CD8-positive, alpha-beta T cell (primary cell): ENCODE measurements at regions of chr19 and their contacts with region 1.

Region 1: DNA sequence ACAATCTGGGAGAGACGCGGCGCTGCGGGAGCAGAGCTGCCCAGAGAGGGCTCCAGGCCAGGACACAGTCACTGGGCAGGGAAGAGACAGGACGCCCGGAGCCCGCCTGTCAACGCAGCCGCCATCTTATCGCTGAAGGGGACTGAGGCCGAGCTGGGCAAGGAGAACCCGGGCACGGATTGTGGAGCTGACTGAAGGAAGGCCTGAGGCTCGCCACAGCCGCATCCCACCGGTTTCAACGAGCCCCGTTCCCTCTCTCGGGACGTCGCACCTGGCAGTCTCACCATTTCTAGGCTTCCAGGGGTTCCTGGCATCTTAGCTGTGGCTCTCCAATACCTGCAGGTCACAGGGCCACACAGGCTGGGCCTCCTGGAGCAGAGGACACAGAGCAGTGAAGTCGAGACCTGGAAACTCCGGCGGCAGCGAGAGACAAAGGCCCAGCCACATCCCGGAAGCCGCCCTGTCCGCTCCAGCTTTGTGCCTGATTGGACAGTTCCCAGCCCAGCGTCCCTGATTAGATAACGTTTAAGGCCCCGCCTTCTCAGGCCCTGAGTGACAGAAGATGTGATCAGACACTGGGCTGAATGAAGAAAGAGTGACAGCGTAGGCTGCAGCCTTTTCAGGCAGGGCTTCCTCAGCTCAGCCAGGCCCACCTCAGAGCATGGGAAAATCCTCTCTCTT is at the start of gene ZNF91:
- DNase-seq: peak; percentile 76 to 97 (median 90)
- ATAC-seq: peak; percentile 94
- H3K4me3 ChIP-seq: peak within 1 kb of the TSS; percentile 81 to 85
- H3K4me3 Mint-ChIP-seq: peak within 1 kb of the TSS; percentile 98
- H3K27ac ChIP-seq: peak within 1 kb of the TSS; percentile 95 to 96
- H3K27ac Mint-ChIP-seq: peak within 1 kb of the TSS; percentile 99
- H3K4me1 ChIP-seq: peaks cover 30% of the 10 kb centered on the region
- H3K4me1 Mint-ChIP-seq: peaks cover 41% of the 10 kb centered on the region
- H3K27me3 ChIP-seq: no peaks in the 10 kb centered on the region
- H3K27me3 Mint-ChIP-seq: no peaks in the 10 kb centered on the region
- CTCF ChIP-seq: no peak
- total RNA-seq, gene ZNF91: 90.1 to 90.4 TPM

Region 2: DNA sequence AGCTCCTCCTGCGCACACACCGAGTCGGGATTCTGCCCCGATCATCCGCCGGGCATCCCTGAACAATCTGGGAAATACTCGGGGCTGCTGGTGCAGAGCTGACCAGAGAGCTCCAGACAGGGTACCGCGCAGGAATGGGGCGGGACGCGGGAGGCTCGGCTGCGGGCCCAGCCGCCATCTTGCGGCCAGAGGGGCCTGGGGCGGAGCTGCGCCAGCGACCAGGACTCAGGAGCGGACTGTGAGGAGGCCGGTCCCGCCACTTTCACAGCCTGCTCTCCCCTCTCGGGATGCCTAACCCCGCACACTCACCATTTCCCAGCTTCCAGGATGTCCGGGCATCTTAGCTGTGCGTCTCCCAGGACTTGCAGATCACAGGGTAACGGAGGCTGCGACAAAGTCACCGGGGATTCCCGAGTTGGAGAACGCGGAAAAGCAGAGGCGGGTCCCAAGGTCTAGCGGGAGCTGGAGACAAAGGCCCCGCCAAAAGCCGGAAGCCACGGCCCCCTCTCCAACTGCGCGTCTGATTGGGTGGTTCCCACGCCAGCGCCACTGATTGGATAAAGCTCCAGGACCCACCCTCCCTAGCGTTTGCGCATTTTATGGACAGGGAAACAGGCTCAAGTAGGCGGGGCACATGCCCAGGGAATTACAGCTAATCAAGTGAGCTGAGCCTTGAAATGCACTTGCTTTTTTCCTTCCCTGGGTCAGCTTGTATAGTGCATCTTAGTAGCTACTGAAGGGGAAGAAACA is 1543.4 kb before region 1 on chr19:
- CTCF ChIA-PET with region 1: no interaction called
- POLR2A ChIA-PET with region 1: no interaction called
- intact Hi-C with region 1: loop called in 1 of 2 experiments (anchors 5 kb)
- DNase-seq: peak; percentile 72 to 94 (median 90)
- ATAC-seq: peak; percentile 99
- H3K4me3 ChIP-seq: peak overlapping the region; percentile 95
- H3K4me3 Mint-ChIP-seq: peak overlapping the region; percentile 93
- H3K27ac ChIP-seq: peak overlapping the region; percentile 68 to 80
- H3K27ac Mint-ChIP-seq: peak overlapping the region; percentile 91
- H3K4me1 ChIP-seq: peaks cover 11% of the 10 kb centered on the region
- H3K4me1 Mint-ChIP-seq: peaks cover 26% of the 10 kb centered on the region
- H3K27me3 ChIP-seq: no peaks in the 10 kb centered on the region
- H3K27me3 Mint-ChIP-seq: peaks cover 2% of the 10 kb centered on the region
- CTCF ChIP-seq: no peak

Region 3: DNA sequence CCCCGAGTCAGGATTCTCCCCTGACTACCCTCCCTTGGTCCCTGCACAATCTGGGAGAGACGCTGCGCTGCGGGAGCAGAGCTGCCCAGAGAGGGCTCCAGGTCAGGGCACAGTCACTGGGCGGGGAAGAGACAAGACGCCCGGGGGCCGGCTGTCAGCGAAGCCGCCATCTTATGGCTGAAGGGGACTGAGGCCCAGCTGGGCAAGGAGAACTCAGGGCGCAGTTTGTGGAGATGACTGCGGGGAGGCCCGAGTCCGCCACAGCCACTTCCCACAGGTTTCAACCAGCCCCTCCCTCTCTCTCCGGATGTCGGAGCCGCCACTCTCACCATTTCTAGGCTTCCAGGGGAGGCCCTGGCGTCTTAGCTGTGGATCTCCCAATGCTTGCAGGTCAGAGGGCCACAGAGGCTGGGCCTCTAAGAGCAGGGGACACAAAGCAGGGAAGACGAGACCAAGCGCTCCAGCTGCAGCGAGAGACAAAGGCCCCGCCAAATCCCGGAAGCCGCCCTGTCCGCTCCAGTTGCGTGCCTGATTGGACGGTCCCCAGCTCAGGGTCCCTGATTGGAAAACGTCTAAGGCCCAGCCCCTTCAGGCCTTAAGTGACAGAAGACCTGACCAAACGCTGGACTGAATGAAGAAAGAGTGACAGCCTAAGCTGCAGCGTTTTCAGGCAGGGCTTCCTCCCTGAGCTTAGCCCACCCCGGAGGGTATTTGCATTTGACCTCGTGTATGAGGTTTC is 145.1 kb before region 1 on chr19 and contains the start of gene ZNF724:
- CTCF ChIA-PET with region 1: no interaction called
- POLR2A ChIA-PET with region 1: interaction called, 13 read pairs
- intact Hi-C with region 1: loop called in 1 of 2 experiments (anchors 1 kb)
- DNase-seq: peak; percentile 78 to 94 (median 88)
- ATAC-seq: peak; percentile 99
- H3K4me3 ChIP-seq: peak within 1 kb of the TSS; percentile 77 to 99
- H3K4me3 Mint-ChIP-seq: peak within 1 kb of the TSS; percentile 96
- H3K27ac ChIP-seq: peak within 1 kb of the TSS; percentile 54 to 62
- H3K27ac Mint-ChIP-seq: peak within 1 kb of the TSS; percentile 81
- H3K4me1 ChIP-seq: no peaks in the 10 kb centered on the region
- H3K4me1 Mint-ChIP-seq: peaks cover 12% of the 10 kb centered on the region
- H3K27me3 ChIP-seq: no peaks in the 10 kb centered on the region
- H3K27me3 Mint-ChIP-seq: no peaks in the 10 kb centered on the region
- CTCF ChIP-seq: no peak
- total RNA-seq, gene ZNF724: 3.6 to 4.2 TPM

Region 4: GRCh38 chr19:23263870-23264590 is 131.2 kb before region 1 on chr19:
- CTCF ChIA-PET with region 1: no interaction called
- POLR2A ChIA-PET with region 1: no interaction called
- intact Hi-C with region 1: no loop called
- DNase-seq: no peak
- ATAC-seq: no peak
- H3K4me3 ChIP-seq: no peak overlapping the region
- H3K4me3 Mint-ChIP-seq: no peak overlapping the region
- H3K27ac ChIP-seq: no peak overlapping the region
- H3K27ac Mint-ChIP-seq: no peak overlapping the region
- H3K4me1 ChIP-seq: no peaks in the 10 kb centered on the region
- H3K4me1 Mint-ChIP-seq: peaks cover 4% of the 10 kb centered on the region
- H3K27me3 ChIP-seq: no peaks in the 10 kb centered on the region
- H3K27me3 Mint-ChIP-seq: no peaks in the 10 kb centered on the region
- CTCF ChIP-seq: no peak

Region 5: GRCh38 chr19:23384858-23385257 is 10.3 kb before region 1 on chr19:
- CTCF ChIA-PET with region 1: interaction called, 12 read pairs
- POLR2A ChIA-PET with region 1: interaction called, 14 read pairs
- intact Hi-C with region 1: no loop called
- DNase-seq: no peak
- ATAC-seq: no peak
- H3K4me3 ChIP-seq: no peak overlapping the region
- H3K4me3 Mint-ChIP-seq: no peak overlapping the region
- H3K27ac ChIP-seq: no peak overlapping the region
- H3K27ac Mint-ChIP-seq: no peak overlapping the region
- H3K4me1 ChIP-seq: no peaks in the 10 kb centered on the region
- H3K4me1 Mint-ChIP-seq: peaks cover 37% of the 10 kb centered on the region
- H3K27me3 ChIP-seq: no peaks in the 10 kb centered on the region
- H3K27me3 Mint-ChIP-seq: no peaks in the 10 kb centered on the region
- CTCF ChIP-seq: no peak

Region 6: DNA sequence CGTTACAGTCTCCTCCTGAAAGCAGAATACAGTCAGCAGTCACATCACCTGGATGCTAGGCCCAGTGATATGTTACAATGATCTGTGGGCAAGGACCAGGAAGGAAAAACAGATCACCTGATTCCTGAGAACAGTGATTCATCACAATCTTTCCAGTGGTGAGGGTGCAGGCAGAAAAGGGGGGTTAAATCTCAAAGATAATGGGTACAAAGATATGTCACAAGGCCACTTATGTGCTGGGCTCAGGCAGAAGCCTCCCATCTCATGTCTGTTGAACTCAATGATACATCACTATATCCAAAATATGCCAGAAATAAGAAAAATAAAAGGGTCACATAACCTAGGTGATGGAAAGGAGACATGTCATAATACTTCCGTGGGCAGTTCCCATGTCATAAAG is 10.9 kb after region 1 on chr19:
- CTCF ChIA-PET with region 1: no interaction called
- POLR2A ChIA-PET with region 1: no interaction called
- intact Hi-C with region 1: no loop called
- DNase-seq: no peak
- ATAC-seq: no peak
- H3K4me3 ChIP-seq: no peak overlapping the region
- H3K4me3 Mint-ChIP-seq: no peak overlapping the region
- H3K27ac ChIP-seq: no peak overlapping the region
- H3K27ac Mint-ChIP-seq: no peak overlapping the region
- H3K4me1 ChIP-seq: no peaks in the 10 kb centered on the region
- H3K4me1 Mint-ChIP-seq: no peaks in the 10 kb centered on the region
- H3K27me3 ChIP-seq: no peaks in the 10 kb centered on the region
- H3K27me3 Mint-ChIP-seq: no peaks in the 10 kb centered on the region
- CTCF ChIP-seq: no peak

Region 7: DNA sequence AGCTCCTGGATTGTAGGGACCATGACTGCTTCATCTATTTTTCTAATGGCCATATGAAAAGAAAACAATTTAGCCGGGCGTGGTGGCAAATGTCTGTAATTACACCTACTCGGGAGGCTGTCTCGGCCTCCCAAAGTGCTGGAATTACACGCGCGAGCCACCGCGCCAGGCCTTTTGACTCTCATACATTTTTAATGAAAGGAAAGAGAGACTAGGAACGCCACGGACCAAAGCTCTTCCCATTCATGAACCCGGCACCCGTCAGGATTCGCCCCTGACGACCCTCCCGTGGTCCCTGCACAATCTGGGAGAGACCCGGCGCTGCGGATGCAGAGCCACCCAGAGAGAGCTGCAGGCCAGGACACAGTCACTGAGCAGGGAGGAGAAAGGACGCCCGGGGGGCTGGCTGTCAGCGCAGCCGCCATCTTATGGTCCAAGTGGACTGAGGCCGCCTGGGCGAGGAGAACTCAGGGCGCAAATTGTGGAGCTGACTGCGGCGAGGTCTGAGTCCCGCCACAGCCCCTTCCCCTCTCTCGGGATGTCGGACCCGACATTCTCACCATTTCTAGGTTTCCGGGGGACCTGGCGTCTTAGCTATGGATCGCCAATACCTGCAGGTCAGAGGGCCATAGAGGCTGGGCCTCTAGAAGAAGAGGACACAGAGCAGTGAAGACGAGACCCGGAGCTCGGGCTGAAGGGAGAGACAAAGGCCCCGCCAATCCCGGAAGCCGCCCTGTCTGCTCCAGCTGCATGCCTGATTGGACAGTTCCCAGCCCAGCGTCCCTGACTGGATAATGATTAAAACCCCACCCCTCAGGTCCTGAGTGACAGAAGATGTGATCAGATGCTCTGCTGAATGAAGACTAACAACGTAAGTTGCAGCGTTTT is 363.2 kb after region 1 on chr19 and contains the start of gene ZNF681:
- CTCF ChIA-PET with region 1: no interaction called
- POLR2A ChIA-PET with region 1: interaction called, 8 read pairs
- intact Hi-C with region 1: loop called (anchors 1 to 5 kb)
- DNase-seq: peak; percentile 67 to 93 (median 86)
- ATAC-seq: peak; percentile 85
- H3K4me3 ChIP-seq: peak within 1 kb of the TSS; percentile 82 to 95
- H3K4me3 Mint-ChIP-seq: peak within 1 kb of the TSS; percentile 95
- H3K27ac ChIP-seq: peak within 1 kb of the TSS; percentile 77 to 85
- H3K27ac Mint-ChIP-seq: peak within 1 kb of the TSS; percentile 97
- H3K4me1 ChIP-seq: peaks cover 18% of the 10 kb centered on the region
- H3K4me1 Mint-ChIP-seq: peaks cover 37% of the 10 kb centered on the region
- H3K27me3 ChIP-seq: no peaks in the 10 kb centered on the region
- H3K27me3 Mint-ChIP-seq: no peaks in the 10 kb centered on the region
- CTCF ChIP-seq: no peak
- total RNA-seq, gene ZNF681: 1.7 to 1.8 TPM

Region 8: DNA sequence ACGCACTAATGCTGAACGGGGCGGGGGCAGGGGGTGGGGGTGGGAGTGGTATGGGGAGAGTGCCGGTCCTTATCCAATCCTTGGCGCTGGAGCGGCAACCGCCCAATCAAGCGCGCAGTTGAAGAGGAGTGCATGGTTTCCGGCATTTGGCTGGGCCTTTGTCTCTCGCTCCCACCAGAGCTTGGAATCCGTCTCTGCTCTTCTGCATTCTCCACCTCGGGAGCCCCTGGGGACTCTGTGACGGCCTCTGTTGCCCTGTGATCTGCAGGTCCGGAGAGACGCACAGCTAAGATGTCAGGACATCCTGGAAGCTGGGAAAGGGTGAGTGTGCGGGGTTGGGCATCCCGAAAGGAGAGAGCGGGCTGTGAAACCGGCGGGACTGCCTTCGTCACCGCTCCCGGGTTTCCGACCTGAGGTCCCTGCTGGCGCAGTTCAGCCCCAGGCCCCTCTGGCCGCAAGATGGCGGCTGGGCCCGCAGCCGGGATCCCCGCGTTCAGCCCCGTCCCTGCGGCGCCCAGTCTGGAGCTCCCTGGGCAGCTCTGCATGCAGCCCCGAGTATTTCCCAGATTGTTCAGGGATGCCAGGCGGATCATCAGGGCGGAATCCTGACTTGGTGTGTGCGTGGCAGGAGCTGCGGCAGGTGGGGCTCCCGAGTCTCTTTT is 638.3 kb after region 1 on chr19:
- CTCF ChIA-PET with region 1: no interaction called
- POLR2A ChIA-PET with region 1: interaction called, 16 read pairs
- intact Hi-C with region 1: loop called (anchors 1 to 2 kb)
- DNase-seq: peak; percentile 70 to 92 (median 84)
- ATAC-seq: peak; percentile 99
- H3K4me3 ChIP-seq: peak overlapping the region; percentile 99
- H3K4me3 Mint-ChIP-seq: peak overlapping the region; percentile 100
- H3K27ac ChIP-seq: peak overlapping the region; percentile 88 to 92
- H3K27ac Mint-ChIP-seq: peak overlapping the region; percentile 99
- H3K4me1 ChIP-seq: peaks cover 34% of the 10 kb centered on the region
- H3K4me1 Mint-ChIP-seq: peaks cover 48% of the 10 kb centered on the region
- H3K27me3 ChIP-seq: no peaks in the 10 kb centered on the region
- H3K27me3 Mint-ChIP-seq: no peaks in the 10 kb centered on the region
- CTCF ChIP-seq: no peak